Activated B cell treated with CpG ODN at 0.5 μM for 24 hours (primary cell): ENCODE measurements at regions of chr2 and their contacts with region 1.

Region 1: GRCh38 chr2:44955593-44956392 is 14.3 kb downstream of the SIX3 start:
- DNase-seq: peak; percentile 79
- ATAC-seq: peak; percentile 86
- H3K4me3 Mint-ChIP-seq: peak overlapping the region; percentile 63
- H3K27ac Mint-ChIP-seq: no peak overlapping the region
- H3K4me1 Mint-ChIP-seq: peaks cover 38% of the 10 kb centered on the region
- H3K27me3 Mint-ChIP-seq: peaks cover 67% of the 10 kb centered on the region
- CTCF ChIP-seq: peak; percentile 79

Region 2: GRCh38 chr2:43877782-43878464 is 1077.9 kb before region 1 on chr2:
- CTCF ChIA-PET with region 1: interaction called, 4 read pairs
- POLR2A ChIA-PET with region 1: no interaction called
- intact Hi-C with region 1: loop called (anchors 2 kb)
- DNase-seq: peak; percentile 32
- ATAC-seq: peak; percentile 73
- H3K4me3 Mint-ChIP-seq: no peak overlapping the region
- H3K27ac Mint-ChIP-seq: no peak overlapping the region
- H3K4me1 Mint-ChIP-seq: peaks cover 6% of the 10 kb centered on the region
- H3K27me3 Mint-ChIP-seq: peaks cover 11% of the 10 kb centered on the region
- CTCF ChIP-seq: peak; percentile 47

Region 3: DNA sequence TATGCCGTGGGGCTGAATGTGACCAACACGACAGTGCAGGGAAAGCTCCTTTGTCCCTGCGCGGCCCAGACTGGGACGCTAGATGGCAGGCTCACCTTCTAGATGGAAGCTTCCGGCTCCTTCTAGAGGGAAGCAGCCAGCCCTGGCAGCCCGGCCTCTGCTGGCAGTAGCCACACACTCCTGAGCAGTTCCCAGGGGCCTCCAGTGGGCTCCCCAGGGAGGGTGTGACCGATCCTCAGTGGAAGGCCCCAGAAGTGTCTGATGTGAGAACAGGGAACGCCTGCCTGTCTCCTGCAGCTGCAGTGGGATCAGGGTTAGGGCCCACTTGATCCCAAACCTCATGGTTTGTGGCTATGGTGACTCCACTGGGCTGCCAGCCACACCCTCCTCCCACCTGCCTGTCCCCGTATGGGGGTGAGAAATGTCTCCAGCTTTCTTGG is 911.5 kb before region 1 on chr2:
- CTCF ChIA-PET with region 1: interaction called, 28 read pairs
- POLR2A ChIA-PET with region 1: no interaction called
- intact Hi-C with region 1: no loop called
- DNase-seq: peak; percentile 67
- ATAC-seq: peak; percentile 100
- H3K4me3 Mint-ChIP-seq: no peak overlapping the region
- H3K27ac Mint-ChIP-seq: no peak overlapping the region
- H3K4me1 Mint-ChIP-seq: peaks cover 2% of the 10 kb centered on the region
- H3K27me3 Mint-ChIP-seq: peaks cover 3% of the 10 kb centered on the region
- CTCF ChIP-seq: peak; percentile 35

Region 4: GRCh38 chr2:44244129-44244871 is 711.5 kb before region 1 on chr2:
- CTCF ChIA-PET with region 1: interaction called, 15 read pairs
- POLR2A ChIA-PET with region 1: no interaction called
- intact Hi-C with region 1: loop called (anchors 1 kb)
- DNase-seq: no peak
- ATAC-seq: peak; percentile 91
- H3K4me3 Mint-ChIP-seq: peak overlapping the region; percentile 67
- H3K27ac Mint-ChIP-seq: peak overlapping the region; percentile 27
- H3K4me1 Mint-ChIP-seq: peaks cover 12% of the 10 kb centered on the region
- H3K27me3 Mint-ChIP-seq: no peaks in the 10 kb centered on the region
- CTCF ChIP-seq: no peak

Region 5: GRCh38 chr2:44392338-44392943 is 563.4 kb before region 1 on chr2:
- CTCF ChIA-PET with region 1: interaction called, 141 read pairs
- POLR2A ChIA-PET with region 1: no interaction called
- intact Hi-C with region 1: loop called (anchors 1 kb)
- DNase-seq: no peak
- ATAC-seq: no peak
- H3K4me3 Mint-ChIP-seq: no peak overlapping the region
- H3K27ac Mint-ChIP-seq: no peak overlapping the region
- H3K4me1 Mint-ChIP-seq: peaks cover 3% of the 10 kb centered on the region
- H3K27me3 Mint-ChIP-seq: no peaks in the 10 kb centered on the region
- CTCF ChIP-seq: peak; percentile 81

Region 6: GRCh38 chr2:44560352-44560751 is 395.4 kb before region 1 on chr2:
- CTCF ChIA-PET with region 1: interaction called, 79 read pairs
- POLR2A ChIA-PET with region 1: no interaction called
- intact Hi-C with region 1: loop called (anchors 1 kb)
- DNase-seq: no peak
- ATAC-seq: no peak
- H3K4me3 Mint-ChIP-seq: no peak overlapping the region
- H3K27ac Mint-ChIP-seq: no peak overlapping the region
- H3K4me1 Mint-ChIP-seq: peaks cover 10% of the 10 kb centered on the region
- H3K27me3 Mint-ChIP-seq: no peaks in the 10 kb centered on the region
- CTCF ChIP-seq: no peak